ENCODE measurements at regions of chr4 and their contacts with region 1.

Region 1: DNA sequence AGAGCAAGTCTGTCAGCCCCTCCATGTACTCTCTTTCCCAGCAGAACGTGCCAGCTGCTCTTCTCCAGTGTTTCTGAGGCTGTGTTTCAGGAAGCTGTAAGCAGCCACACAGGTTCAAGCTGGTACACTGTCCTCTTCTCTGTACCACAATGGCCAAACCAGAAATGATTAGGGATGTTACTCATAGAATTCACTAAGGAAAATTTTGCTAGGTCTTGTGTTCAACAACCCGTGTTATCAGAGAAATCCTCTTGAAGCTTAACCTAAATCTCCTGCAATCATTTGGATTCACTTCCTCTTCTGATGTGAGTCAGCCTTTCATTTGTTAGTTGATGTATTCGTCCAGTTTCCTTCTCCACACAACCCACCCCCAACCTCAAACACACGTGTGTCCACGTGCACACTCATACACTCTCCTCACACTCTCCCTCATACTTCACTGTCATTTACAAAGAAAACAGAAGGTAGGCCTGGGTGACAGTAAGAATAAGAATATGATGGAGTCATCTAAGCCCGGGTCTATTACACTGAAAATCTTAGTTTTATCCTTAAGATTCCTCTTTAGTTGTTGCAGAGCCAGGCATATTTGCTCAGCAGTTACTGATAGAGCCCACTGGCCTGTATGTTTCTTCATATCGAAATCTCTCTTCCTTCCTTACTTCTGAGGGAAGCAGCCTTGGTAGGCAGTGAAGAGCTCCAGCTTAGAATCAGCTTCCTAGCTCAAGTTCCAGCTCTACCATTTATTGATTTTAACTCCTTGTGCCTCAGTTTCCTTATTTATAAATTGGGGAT is 63.4 kb downstream of the DCUN1D4 start:
- DNase-seq: peak; percentile 57 to 92 (median 85)
- H3K4me3 ChIP-seq: peak overlapping the region in 1 of 7 experiments; percentile 4
- H3K27ac ChIP-seq: peak overlapping the region; percentile 34 to 59
- H3K4me1 ChIP-seq: peaks cover 13 to 24% (median 18%) of the 10 kb centered on the region in 4 experiments
- H3K27me3 ChIP-seq: no peaks in the 10 kb centered on the region

Region 2: GRCh38 chr4:51890760-51891159 is 15.6 kb before region 1 on chr4:
- CTCF ChIA-PET with region 1: interaction called, 19 read pairs
- POLR2A ChIA-PET with region 1: no interaction called
- DNase-seq: no peak
- H3K4me3 ChIP-seq: no peak overlapping the region
- H3K27ac ChIP-seq: no peak overlapping the region
- H3K4me1 ChIP-seq: no peaks in the 10 kb centered on the region
- H3K27me3 ChIP-seq: no peaks in the 10 kb centered on the region

Region 3: GRCh38 chr4:51895813-51896408 is 10.5 kb before region 1 on chr4:
- CTCF ChIA-PET with region 1: interaction called, 19 read pairs
- POLR2A ChIA-PET with region 1: no interaction called
- DNase-seq: peak; percentile 67 to 83 (median 82)
- H3K4me3 ChIP-seq: no peak overlapping the region
- H3K27ac ChIP-seq: no peak overlapping the region
- H3K4me1 ChIP-seq: peaks cover 0 to 7% (median under 1%) of the 10 kb centered on the region in 4 experiments
- H3K27me3 ChIP-seq: no peaks in the 10 kb centered on the region

Measured in common myeloid progenitor, CD34-positive (primary cell).